ENCODE measurements at regions of chr5 and their contacts with region 1.

Region 1: DNA sequence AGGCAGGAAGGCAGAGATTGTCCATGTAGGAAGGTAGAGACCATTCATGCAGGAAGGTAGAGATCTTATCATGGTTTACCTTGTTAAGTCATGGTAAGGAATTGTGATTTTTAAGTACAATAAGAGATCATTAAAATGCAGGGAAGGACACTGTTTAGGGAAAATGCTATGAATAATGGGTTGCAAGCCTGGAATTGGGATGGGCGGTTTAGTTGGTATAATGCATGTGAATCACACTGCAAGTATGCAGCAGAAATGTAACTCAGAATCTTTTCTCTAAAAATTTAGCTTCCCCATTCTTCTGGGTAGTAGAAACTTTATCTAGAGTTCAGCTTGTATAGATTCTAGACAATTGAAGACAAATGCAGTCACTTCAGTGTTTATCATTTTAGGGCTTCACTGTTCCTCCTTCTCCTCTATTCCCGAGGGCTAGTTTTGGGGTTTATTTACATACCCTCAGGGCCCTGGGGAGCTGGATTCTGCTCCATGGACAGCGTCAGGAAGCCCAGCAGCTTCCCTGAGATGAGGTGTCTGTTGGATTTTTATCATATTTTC is 212.0 kb downstream of the SREK1 start:
- DNase-seq: no peak

Region 2: DNA sequence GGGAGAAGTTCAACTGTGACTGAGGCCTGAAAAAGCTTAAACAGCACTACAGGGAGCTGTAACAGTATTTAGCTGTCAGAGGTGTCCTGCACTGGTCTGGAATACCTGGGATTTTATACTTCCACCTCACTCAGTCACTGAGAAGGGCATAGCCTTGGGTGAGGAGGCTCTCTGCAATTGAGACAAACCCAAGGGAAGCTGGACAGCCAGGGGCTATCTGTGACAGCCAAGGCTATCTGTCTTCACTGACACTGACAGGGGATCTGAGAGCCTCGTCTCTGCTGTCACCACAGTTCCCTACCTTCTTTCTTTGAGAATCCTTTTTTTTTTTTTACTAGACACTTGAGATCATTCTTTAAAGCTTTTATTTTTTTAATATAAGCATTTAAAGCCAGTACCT is 1196.7 kb after region 1 on chr5:
- intact Hi-C with region 1: loop called in 1 of 2 experiments (anchors 5 kb)
- DNase-seq: no peak